Caco-2 (cell line): ENCODE measurements at regions of chr5 and their contacts with region 1.

Region 1: GRCh38 chr5:61254969-61255555 is 77.0 kb upstream of the ZSWIM6 start:
- DNase-seq: peak; percentile 55 to 62
- H3K4me3 ChIP-seq: no peak overlapping the region
- H3K4me3 Mint-ChIP-seq: peak overlapping the region; percentile 34
- H3K27ac Mint-ChIP-seq: peak overlapping the region; percentile 30
- H3K4me1 ChIP-seq: peaks cover 32% of the 10 kb centered on the region
- H3K4me1 Mint-ChIP-seq: peaks cover 16% of the 10 kb centered on the region
- H3K27me3 ChIP-seq: no peaks in the 10 kb centered on the region
- H3K27me3 Mint-ChIP-seq: no peaks in the 10 kb centered on the region
- CTCF ChIP-seq: no peak

Region 2: GRCh38 chr5:61301341-61302199 is 46.5 kb after region 1 on chr5:
- CTCF ChIA-PET with region 1: no interaction called
- POLR2A ChIA-PET with region 1: interaction called, 7 read pairs
- intact Hi-C with region 1: loop called (anchors 1 kb)
- DNase-seq: peak; percentile 89 to 93
- H3K4me3 ChIP-seq: no peak overlapping the region
- H3K4me3 Mint-ChIP-seq: peak overlapping the region; percentile 52
- H3K27ac Mint-ChIP-seq: peak overlapping the region; percentile 86
- H3K4me1 ChIP-seq: peaks cover 52% of the 10 kb centered on the region
- H3K4me1 Mint-ChIP-seq: peaks cover 34% of the 10 kb centered on the region
- H3K27me3 ChIP-seq: no peaks in the 10 kb centered on the region
- H3K27me3 Mint-ChIP-seq: no peaks in the 10 kb centered on the region
- CTCF ChIP-seq: no peak

Region 3: DNA sequence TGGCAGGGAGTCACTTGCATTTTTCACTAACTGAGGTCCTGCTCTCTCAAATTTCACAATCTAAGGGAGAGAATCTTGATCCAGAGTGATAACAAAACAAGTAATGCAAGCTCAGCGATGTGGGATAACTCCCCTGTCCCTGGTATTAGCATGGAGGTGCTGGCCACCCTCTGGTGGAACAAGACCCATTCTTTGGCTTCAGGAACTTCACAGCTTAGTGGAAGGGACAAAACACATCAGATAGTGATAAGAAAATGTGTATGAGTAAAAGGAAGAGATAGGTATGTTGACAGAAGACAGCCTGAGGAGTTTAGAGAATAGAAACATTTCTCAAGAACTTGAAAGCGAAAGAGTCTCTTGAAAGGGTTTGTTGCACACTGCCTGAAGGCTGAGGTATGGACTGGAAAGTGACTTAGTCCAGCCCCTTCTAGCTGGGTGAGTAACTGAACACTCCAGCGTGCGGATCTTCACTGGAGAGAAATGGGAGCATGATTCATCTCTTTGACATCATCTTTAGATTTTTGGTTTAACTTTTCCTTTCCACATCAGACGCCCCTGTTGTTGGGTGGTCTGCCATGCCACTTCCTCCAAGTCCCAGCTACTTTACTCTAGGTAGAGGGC is 51.6 kb after region 1 on chr5:
- CTCF ChIA-PET with region 1: no interaction called
- POLR2A ChIA-PET with region 1: interaction called, 7 read pairs
- intact Hi-C with region 1: loop called (anchors 1 kb)
- DNase-seq: peak; percentile 69 to 72
- H3K4me3 ChIP-seq: no peak overlapping the region
- H3K4me3 Mint-ChIP-seq: peak overlapping the region; percentile 8
- H3K27ac Mint-ChIP-seq: peak overlapping the region; percentile 30
- H3K4me1 ChIP-seq: peaks cover 74% of the 10 kb centered on the region
- H3K4me1 Mint-ChIP-seq: peaks cover 56% of the 10 kb centered on the region
- H3K27me3 ChIP-seq: no peaks in the 10 kb centered on the region
- H3K27me3 Mint-ChIP-seq: no peaks in the 10 kb centered on the region
- CTCF ChIP-seq: no peak